Spleen (tissue), 13 donors: ENCODE measurements at regions of chr9 and their contacts with region 1.

Region 1: DNA sequence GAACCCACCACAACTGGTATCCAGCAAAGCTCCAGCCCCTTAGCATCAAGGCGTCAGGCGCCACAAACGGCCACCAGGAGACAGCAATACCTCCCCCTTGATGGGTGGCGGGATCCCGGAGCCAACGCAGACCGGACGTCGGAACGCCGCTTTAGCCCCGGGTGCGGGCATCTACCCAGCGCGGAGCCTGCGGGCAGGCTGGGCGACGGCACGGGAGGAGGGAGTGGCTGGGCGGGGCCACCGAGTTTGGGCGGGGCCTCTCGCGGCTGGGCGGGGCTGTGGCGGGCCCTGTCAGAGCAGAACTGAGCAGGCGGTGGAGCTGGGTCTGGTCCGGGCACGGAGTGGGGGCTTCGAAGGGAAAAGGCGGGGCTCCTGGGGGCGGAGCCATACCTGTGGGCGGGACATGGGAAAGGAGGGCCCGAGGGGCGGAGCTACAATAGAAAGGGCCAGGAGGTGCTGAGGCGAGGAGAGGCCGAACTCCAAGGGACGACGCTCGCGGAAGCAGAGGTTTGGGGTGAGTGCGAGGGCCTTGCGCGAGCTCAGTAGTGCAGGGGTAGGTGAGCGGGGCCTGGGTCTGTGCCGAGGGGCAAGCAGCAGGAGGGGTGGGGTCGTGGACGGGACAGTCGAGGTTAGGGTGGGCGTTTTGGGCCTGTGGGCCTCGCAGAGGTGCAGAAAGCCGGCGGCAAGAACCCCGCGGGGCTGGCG is 40.2 kb upstream of the GARNL3 start:
- DNase-seq: peak; percentile 96
- H3K4me3 ChIP-seq: peak overlapping the region; percentile 30 to 91 (median 76)
- H3K27ac ChIP-seq: peak overlapping the region in 6 of 8 donors; percentile 65 to 84 (median 80)
- H3K4me1 ChIP-seq: peaks cover 7 to 42% (median 18%) of the 10 kb centered on the region in 6 donors
- H3K27me3 ChIP-seq: peaks cover 0 to 21% (median 0%) of the 10 kb centered on the region in 7 donors
- CTCF ChIP-seq: peak in 4 of 11 experiments; percentile 11 to 32 (median 22)
- POLR2A ChIP-seq: no peak

Region 2: GRCh38 chr9:127396808-127397497 is 172.6 kb after region 1 on chr9 and contains the start of gene SLC2A8:
- intact Hi-C with region 1: loop called (anchors 10 kb)
- DNase-seq: peak; percentile 98
- H3K4me3 ChIP-seq: peak within 1 kb of the TSS; percentile 72 to 90 (median 82)
- H3K27ac ChIP-seq: peak within 1 kb of the TSS; percentile 67 to 89 (median 86)
- H3K4me1 ChIP-seq: peaks cover 6 to 35% (median 24%) of the 10 kb centered on the region in 6 donors
- H3K27me3 ChIP-seq: peaks cover 0 to 42% (median 0%) of the 10 kb centered on the region in 7 donors
- CTCF ChIP-seq: peak in 6 of 11 experiments; percentile 14 to 56 (median 46)
- POLR2A ChIP-seq: peak in 1 of 3 donors; percentile 55
- total RNA-seq, gene SLC2A8: 16.8 to 32.0 (median 23.0) TPM